SK-N-SH (cell line): ENCODE measurements at regions of chr17 and their contacts with region 1.

Region 1: GRCh38 chr17:60641810-60642220 is 35.8 kb upstream of the BCAS3 start:
- DNase-seq: peak; percentile 75
- H3K4me3 ChIP-seq: no peak overlapping the region; a peak in 1 of 4 replicates
- H3K27ac ChIP-seq: peak overlapping the region in 1 of 2 experiments; percentile 10; a peak in 1 of 4 replicates
- H3K4me1 ChIP-seq: peaks cover 0 to 3% of the 10 kb centered on the region in 2 experiments; a peak in 2 of 4 replicates
- H3K27me3 ChIP-seq: no peaks in the 10 kb centered on the region
- CTCF ChIP-seq: peak; percentile 68
- EP300 ChIP-seq: no peak
- RAD21 ChIP-seq: peak; percentile 72

Region 2: DNA sequence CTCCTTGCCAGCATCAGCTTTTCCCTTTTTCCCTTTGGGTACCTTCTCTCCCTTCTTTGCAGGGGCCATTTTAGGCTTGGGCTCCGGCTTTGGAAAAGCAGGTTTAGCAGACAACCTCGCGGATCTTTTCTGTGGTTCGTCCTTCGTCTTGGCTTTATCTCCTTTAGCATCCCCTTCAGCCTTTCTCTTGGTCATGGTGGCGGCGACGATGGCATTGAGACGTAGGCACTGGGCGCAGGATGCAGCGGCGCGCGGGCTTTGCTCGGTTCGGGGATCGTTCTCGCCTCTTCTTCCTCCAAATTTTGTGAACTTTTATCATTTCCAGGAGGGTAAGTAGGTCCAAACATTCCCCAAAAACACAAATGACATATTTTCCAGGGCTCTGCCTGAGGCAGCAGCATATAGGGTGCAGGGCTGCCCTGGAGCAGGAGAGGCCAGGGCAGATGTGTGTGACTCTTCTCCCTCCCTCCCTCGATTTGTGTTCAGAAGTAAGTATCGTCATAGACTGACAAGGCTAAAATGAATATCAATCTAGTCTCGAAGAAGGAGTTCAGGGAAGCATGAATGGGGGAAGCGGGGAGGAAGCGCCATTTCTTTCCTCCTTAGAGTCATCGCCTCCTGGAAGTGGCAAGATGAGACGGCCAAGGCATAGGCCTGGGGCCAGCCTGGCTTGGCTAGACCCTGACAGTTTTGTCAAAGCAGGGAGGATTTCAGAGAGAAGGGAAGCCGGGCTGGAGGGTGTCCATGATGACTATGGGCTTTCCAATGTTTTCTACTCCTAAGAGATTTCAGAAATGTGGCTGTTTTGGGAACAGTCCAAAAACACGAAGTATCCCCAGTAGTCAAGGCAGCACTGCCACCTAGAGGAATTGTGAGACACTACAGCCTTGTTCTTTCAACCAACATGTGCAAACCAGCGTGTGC is 206.3 kb before region 1 on chr17:
- CTCF ChIA-PET with region 1: interaction called, 12 read pairs
- POLR2A ChIA-PET with region 1: no interaction called
- DNase-seq: peak; percentile 85
- H3K4me3 ChIP-seq: no peak overlapping the region; a peak in 1 of 4 replicates
- H3K27ac ChIP-seq: peak overlapping the region in 1 of 2 experiments; percentile 33; a peak in 1 of 4 replicates
- H3K4me1 ChIP-seq: peaks cover 0 to 4% of the 10 kb centered on the region in 2 experiments; a peak in 1 of 4 replicates
- H3K27me3 ChIP-seq: no peaks in the 10 kb centered on the region
- CTCF ChIP-seq: peak; percentile 99
- EP300 ChIP-seq: no peak; a peak in 1 of 4 replicates
- RAD21 ChIP-seq: peak; percentile 100

Region 3: DNA sequence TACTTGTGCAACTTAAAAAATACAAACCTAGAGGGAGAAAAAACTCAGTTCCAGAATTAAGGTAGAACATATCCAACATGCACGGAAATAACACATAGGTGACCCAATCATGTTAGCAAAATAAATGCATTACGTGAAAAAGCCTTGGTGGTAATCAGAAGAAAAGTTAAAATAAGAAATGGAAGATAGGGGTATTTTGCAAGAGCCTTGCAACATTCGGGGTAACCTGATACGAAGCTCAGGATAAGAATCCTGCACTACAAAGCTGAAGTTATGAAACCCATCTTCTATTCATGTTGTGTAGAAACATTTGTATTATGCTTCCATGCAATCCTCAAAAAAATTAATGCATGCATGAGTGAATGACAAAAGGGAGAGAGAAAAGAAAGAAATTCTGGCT is 186.4 kb before region 1 on chr17:
- CTCF ChIA-PET with region 1: interaction called, 11 read pairs
- POLR2A ChIA-PET with region 1: no interaction called
- DNase-seq: no peak
- H3K4me3 ChIP-seq: no peak overlapping the region
- H3K27ac ChIP-seq: no peak overlapping the region
- H3K4me1 ChIP-seq: no peaks in the 10 kb centered on the region
- H3K27me3 ChIP-seq: no peaks in the 10 kb centered on the region
- CTCF ChIP-seq: no peak
- EP300 ChIP-seq: no peak
- RAD21 ChIP-seq: no peak

Region 4: GRCh38 chr17:60571551-60571950 is 70.3 kb before region 1 on chr17:
- CTCF ChIA-PET with region 1: interaction called, 33 read pairs
- POLR2A ChIA-PET with region 1: no interaction called
- DNase-seq: no peak
- H3K4me3 ChIP-seq: no peak overlapping the region
- H3K27ac ChIP-seq: peak overlapping the region in 1 of 2 experiments; percentile 93; a peak in 2 of 4 replicates
- H3K4me1 ChIP-seq: peaks cover 2 to 11% of the 10 kb centered on the region in 2 experiments; a peak in 3 of 4 replicates
- H3K27me3 ChIP-seq: no peaks in the 10 kb centered on the region
- CTCF ChIP-seq: no peak
- EP300 ChIP-seq: no peak
- RAD21 ChIP-seq: no peak

Region 5: DNA sequence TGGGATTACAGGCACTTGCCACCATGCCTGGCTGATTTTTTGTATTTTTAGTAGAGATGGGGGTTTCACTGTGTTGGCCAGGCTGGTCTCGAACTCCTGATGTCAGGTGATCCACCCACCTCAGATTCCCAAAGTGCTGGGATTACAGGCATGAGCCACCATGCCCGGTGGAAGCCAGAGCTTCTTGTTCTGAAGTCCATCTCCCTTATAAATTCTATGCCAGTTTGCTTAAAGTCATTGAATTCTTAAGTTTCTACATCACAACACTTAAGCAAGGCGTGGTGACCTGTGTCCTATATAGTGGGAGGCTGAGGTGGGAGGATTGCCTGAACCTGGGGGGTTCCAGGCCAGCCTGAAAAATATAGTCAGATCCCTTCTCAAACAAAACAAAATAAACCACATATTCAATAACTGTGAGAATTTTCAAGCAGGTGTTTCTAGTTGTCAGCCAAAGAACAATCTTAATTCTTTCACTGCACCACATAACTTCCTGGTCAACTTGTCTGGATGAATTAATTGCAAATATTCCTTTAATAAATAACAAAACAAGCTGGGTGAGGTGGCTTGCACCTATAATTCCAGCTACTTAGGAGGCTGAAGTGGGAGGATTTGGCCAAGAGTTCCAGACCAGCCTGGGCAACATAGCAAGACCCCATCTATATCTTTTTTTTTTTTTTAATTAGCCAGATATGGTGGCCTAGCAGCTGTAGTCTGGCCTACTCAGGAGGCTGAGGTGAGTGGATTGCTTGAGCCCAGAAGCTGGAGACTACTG is 59.0 kb before region 1 on chr17:
- CTCF ChIA-PET with region 1: interaction called, 31 read pairs
- POLR2A ChIA-PET with region 1: no interaction called
- DNase-seq: no peak
- H3K4me3 ChIP-seq: no peak overlapping the region
- H3K27ac ChIP-seq: no peak overlapping the region
- H3K4me1 ChIP-seq: no peaks in the 10 kb centered on the region
- H3K27me3 ChIP-seq: no peaks in the 10 kb centered on the region
- CTCF ChIP-seq: no peak
- EP300 ChIP-seq: no peak
- RAD21 ChIP-seq: no peak

Region 6: GRCh38 chr17:60613325-60613724 is 28.5 kb before region 1 on chr17:
- CTCF ChIA-PET with region 1: interaction called, 17 read pairs
- POLR2A ChIA-PET with region 1: no interaction called
- DNase-seq: no peak
- H3K4me3 ChIP-seq: no peak overlapping the region
- H3K27ac ChIP-seq: no peak overlapping the region
- H3K4me1 ChIP-seq: peaks cover 0 to 6% of the 10 kb centered on the region in 2 experiments; a peak in 1 of 4 replicates
- H3K27me3 ChIP-seq: no peaks in the 10 kb centered on the region
- CTCF ChIP-seq: no peak
- EP300 ChIP-seq: no peak
- RAD21 ChIP-seq: no peak

Region 7: DNA sequence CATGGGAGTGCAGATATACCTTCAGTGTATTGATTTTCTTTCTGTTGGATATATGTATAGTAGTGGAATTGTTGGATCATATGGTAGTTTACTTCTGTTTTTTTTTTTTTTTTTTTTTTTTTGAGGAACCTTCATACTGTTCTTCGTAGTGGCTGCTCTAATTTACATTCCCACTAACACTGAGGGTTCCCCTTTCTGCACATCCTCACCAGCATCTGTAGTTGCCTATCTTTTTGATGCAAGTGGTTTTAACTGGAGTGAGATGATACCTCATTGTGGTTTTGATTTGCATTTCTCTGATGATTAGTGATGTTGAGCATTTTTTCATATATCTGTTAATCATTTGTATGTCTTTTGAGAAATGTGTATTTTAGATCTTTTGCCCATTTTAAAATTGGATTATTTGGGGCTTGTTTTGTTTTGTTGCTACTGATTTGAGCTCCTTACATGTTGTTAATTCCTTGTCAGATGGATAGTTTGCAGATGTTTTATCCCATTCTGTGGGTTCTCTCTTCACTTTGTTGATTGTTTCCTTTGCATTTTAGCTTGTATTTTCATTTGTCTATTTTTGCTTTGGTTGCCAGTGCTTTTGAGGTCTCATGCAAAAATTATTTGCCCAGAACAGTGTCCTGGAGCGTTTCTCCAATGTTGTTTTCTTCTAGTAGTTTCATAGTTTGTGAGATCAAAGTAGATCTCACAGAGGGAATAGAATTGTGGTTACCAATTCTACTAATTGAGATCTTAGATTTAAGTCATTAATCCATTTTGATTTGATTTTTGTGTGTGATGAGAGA is 10.8 kb after region 1 on chr17:
- CTCF ChIA-PET with region 1: interaction called, 44 read pairs
- POLR2A ChIA-PET with region 1: no interaction called
- DNase-seq: no peak
- H3K4me3 ChIP-seq: no peak overlapping the region
- H3K27ac ChIP-seq: no peak overlapping the region
- H3K4me1 ChIP-seq: no peaks in the 10 kb centered on the region; a peak in 2 of 4 replicates
- H3K27me3 ChIP-seq: no peaks in the 10 kb centered on the region
- CTCF ChIP-seq: no peak
- EP300 ChIP-seq: no peak
- RAD21 ChIP-seq: no peak

Region 8: DNA sequence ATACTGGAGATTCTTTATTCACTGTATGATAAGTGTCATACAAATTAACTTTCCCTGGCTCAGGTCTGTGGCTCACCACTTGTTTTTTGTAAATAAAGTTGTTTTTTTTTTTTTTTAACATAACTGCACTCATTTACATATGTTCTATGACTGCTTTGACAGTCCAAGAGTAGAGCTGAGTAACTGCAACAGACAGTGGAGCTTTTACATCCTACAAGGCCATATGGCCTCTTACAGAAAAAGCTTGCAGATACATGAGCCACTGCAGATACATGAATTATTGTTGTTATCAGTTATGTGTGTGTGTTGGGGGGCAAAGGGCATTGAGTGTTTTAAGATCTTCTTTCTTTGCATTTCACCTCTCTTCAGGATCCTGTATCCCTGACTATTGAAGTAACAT is 347.6 kb after region 1 on chr17:
- CTCF ChIA-PET with region 1: no interaction called
- POLR2A ChIA-PET with region 1: no interaction called
- DNase-seq: peak; percentile 32
- H3K4me3 ChIP-seq: no peak overlapping the region
- H3K27ac ChIP-seq: peak overlapping the region in 1 of 2 experiments; percentile 5; a peak in 1 of 4 replicates
- H3K4me1 ChIP-seq: peaks cover 0 to 3% of the 10 kb centered on the region in 2 experiments; a peak in 2 of 4 replicates
- H3K27me3 ChIP-seq: no peaks in the 10 kb centered on the region
- CTCF ChIP-seq: no peak
- EP300 ChIP-seq: peak in 1 of 2 experiments; percentile 43; a peak in 1 of 4 replicates
- RAD21 ChIP-seq: peak; percentile 12; the same call in 1 of the 2 replicates